Caco-2 (cell line): ENCODE measurements at regions of chr11 and their contacts with region 1.

Region 1: GRCh38 chr11:31870609-31871309 is 59.6 kb upstream of the PAX6 start:
- DNase-seq: peak; percentile 71 to 75
- H3K4me3 ChIP-seq: no peak overlapping the region
- H3K4me3 Mint-ChIP-seq: no peak overlapping the region
- H3K27ac Mint-ChIP-seq: no peak overlapping the region
- H3K4me1 ChIP-seq: no peaks in the 10 kb centered on the region
- H3K4me1 Mint-ChIP-seq: no peaks in the 10 kb centered on the region
- H3K27me3 ChIP-seq: no peaks in the 10 kb centered on the region
- H3K27me3 Mint-ChIP-seq: peaks cover 17% of the 10 kb centered on the region
- CTCF ChIP-seq: peak; percentile 58 to 90

Region 2: DNA sequence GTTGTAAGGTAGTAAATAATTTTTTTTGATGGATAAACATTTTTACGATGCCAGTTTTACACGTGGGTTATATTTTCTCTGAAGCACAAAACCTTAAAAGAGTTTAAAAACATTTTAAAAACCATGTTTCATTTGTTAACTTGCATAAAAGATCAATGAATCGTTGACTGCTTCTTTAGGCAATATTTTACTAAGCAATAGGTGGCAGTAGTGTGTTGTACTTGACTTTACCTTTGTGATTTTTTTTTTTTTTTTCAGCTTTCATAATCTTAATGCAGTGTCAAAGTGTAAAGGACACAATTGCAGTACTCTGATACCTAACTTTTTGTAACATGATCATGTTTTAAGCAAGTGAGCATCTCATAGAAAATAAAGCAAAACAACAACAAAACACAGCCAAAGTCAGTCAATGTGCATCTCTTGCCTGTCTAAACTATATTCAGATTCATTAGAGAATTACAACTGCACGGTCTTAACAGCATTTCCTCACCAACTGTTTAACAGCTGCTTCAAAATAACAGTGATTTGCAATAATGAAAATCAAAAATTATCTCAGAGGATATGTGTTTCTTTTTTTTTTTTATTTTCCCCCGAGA is 473.4 kb before region 1 on chr11:
- CTCF ChIA-PET with region 1: no interaction called
- POLR2A ChIA-PET with region 1: no interaction called
- intact Hi-C with region 1: loop called (anchors 1 kb)
- DNase-seq: peak in 1 of 2 experiments; percentile 17
- H3K4me3 ChIP-seq: no peak overlapping the region
- H3K4me3 Mint-ChIP-seq: no peak overlapping the region
- H3K27ac Mint-ChIP-seq: no peak overlapping the region
- H3K4me1 ChIP-seq: no peaks in the 10 kb centered on the region
- H3K4me1 Mint-ChIP-seq: no peaks in the 10 kb centered on the region
- H3K27me3 ChIP-seq: no peaks in the 10 kb centered on the region
- H3K27me3 Mint-ChIP-seq: no peaks in the 10 kb centered on the region
- CTCF ChIP-seq: peak; percentile 51

Region 3: GRCh38 chr11:31487848-31488247 is 382.9 kb before region 1 on chr11:
- CTCF ChIA-PET with region 1: no interaction called
- POLR2A ChIA-PET with region 1: no interaction called
- intact Hi-C with region 1: loop called (anchors 1 kb)
- DNase-seq: peak in 1 of 2 experiments; percentile 32
- H3K4me3 ChIP-seq: no peak overlapping the region
- H3K4me3 Mint-ChIP-seq: no peak overlapping the region
- H3K27ac Mint-ChIP-seq: no peak overlapping the region
- H3K4me1 ChIP-seq: 0 out of 2 replicates have a peak, but pooled peaks cover 7% of the 10 kb centered on the region
- H3K4me1 Mint-ChIP-seq: no peaks in the 10 kb centered on the region
- H3K27me3 ChIP-seq: no peaks in the 10 kb centered on the region
- H3K27me3 Mint-ChIP-seq: no peaks in the 10 kb centered on the region
- CTCF ChIP-seq: peak; percentile 28 to 49

Region 4: DNA sequence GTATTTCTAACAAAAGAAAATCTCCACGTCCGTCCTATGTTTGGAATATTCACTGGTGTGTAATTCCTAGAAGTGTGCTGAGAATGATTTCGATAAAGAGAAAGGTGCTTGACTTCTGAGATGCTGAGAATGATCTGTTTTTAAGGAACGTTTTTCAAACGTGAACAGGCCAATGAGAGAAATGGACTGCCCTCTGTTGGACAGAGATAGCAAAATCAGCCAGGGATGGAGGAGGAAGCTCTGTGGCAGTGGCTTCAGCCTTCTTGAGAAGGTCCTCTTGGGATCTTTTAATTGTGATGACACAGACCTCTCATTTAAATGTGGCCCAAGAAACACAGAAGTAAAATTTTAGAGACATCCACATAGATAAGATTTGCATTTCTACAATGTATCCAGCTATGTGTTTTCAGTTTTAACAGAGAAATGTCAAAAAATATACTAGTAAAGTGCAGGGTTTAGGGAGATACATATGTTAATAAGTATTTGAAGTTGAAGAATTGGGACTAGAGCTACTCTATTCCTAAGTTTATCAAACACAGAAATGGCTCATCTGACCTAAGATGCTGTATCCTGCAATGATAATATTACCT is 136.1 kb after region 1 on chr11:
- CTCF ChIA-PET with region 1: no interaction called
- POLR2A ChIA-PET with region 1: no interaction called
- intact Hi-C with region 1: loop called (anchors 5 kb)
- DNase-seq: peak in 1 of 2 experiments; percentile 44
- H3K4me3 ChIP-seq: no peak overlapping the region
- H3K4me3 Mint-ChIP-seq: no peak overlapping the region
- H3K27ac Mint-ChIP-seq: no peak overlapping the region
- H3K4me1 ChIP-seq: no peaks in the 10 kb centered on the region
- H3K4me1 Mint-ChIP-seq: no peaks in the 10 kb centered on the region
- H3K27me3 ChIP-seq: peaks cover 2% of the 10 kb centered on the region
- H3K27me3 Mint-ChIP-seq: peaks cover 21% of the 10 kb centered on the region
- CTCF ChIP-seq: peak; percentile 34 to 71